ENCODE measurements at regions of chr6 and their contacts with region 1.

Region 1: GRCh38 chr6:53348371-53349208 is at the start of gene ELOVL5:
- DNase-seq: peak; percentile 99
- H3K4me3 ChIP-seq: peak within 1 kb of the TSS; percentile 77 to 81
- H3K27ac ChIP-seq: peak within 1 kb of the TSS; percentile 99
- H3K4me1 ChIP-seq: peaks cover 5% of the 10 kb centered on the region
- H3K27me3 ChIP-seq: no peaks in the 10 kb centered on the region
- CTCF ChIP-seq: peak in 1 of 4 experiments; percentile 23
- POLR2A ChIP-seq: peak; percentile 88
- total RNA-seq, gene ELOVL5: 193 to 353 TPM

Region 2: DNA sequence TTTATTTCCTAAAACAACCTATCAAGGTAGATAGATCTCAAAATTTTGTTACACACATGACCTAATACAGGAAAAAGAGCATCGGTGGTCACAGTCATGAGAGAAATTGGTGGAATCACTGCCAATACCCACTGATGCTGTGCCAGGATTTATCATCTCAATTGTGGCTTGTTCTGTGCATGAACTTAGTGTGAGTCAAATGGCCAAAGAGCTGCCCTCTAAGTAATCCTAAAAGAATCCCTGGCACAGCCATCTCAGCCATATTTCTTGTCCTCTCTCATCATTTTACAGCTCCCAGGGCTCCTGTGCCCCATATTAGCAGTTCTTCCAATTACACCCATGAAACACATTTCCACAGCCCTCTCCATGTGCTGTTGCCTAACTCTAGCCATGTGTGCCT is 514.1 kb before region 1 on chr6:
- intact Hi-C with region 1: no loop called
- DNase-seq: no peak
- H3K4me3 ChIP-seq: no peak overlapping the region
- H3K27ac ChIP-seq: no peak overlapping the region
- H3K4me1 ChIP-seq: no peaks in the 10 kb centered on the region
- H3K27me3 ChIP-seq: no peaks in the 10 kb centered on the region
- CTCF ChIP-seq: no peak
- POLR2A ChIP-seq: no peak

Region 3: GRCh38 chr6:53179961-53180651 is 168.5 kb before region 1 on chr6:
- intact Hi-C with region 1: no loop called
- DNase-seq: peak; percentile 58
- H3K4me3 ChIP-seq: no peak overlapping the region
- H3K27ac ChIP-seq: peak overlapping the region in 1 of 2 donors; percentile 28
- H3K4me1 ChIP-seq: no peaks in the 10 kb centered on the region
- H3K27me3 ChIP-seq: no peaks in the 10 kb centered on the region
- CTCF ChIP-seq: no peak
- POLR2A ChIP-seq: no peak

Region 4: DNA sequence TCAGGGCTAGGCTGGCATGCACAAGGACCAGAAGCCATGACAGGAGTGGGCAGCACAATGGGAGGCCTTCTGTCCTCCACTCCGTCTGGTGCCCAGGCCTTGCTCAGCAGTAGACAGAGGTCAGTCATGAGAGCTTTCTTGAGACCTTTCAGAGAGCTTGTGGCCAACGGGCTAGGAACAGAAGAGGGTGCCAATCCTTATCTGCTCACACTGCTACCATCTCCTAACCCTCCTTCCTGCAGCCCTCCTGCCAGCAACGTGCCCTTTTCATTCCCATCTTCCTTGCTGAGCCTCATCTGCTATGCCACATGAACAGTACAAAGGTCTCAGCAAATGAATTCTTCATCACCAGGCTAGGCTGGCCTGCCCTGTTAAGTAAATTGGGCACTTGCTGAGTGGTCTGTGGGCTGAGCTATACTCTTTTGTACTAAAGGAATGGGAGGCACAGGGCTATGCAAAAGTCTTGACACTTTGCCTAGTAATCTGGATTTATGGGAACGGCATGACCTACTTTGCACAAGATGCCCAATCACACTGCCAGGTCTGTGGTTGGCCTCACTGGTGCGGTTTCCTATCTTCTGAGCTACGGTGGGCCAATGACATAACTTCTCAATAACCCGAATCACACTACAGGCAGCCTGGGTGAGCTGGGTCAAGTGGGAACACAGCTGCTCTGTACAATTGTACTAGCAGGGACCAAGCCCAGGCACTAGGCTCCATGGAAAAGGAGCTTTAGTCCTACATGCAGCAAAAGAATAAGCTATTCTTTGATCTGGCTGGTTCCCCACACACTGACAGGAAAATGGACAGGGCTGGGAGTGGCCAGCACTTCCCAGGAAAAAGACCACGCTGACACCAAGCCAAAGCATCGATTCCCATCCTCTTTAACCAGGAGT is 47.7 kb before region 1 on chr6:
- intact Hi-C with region 1: loop called (anchors 5 kb)
- DNase-seq: peak; percentile 41
- H3K4me3 ChIP-seq: no peak overlapping the region
- H3K27ac ChIP-seq: peak overlapping the region; percentile 31 to 47
- H3K4me1 ChIP-seq: peaks cover 20% of the 10 kb centered on the region
- H3K27me3 ChIP-seq: no peaks in the 10 kb centered on the region
- CTCF ChIP-seq: no peak
- POLR2A ChIP-seq: no peak

Region 5: GRCh38 chr6:53359072-53359842 is 10.7 kb after region 1 on chr6:
- intact Hi-C with region 1: loop called (anchors 1 kb)
- DNase-seq: peak; percentile 94
- H3K4me3 ChIP-seq: peak overlapping the region; percentile 58 to 64
- H3K27ac ChIP-seq: peak overlapping the region; percentile 91 to 95
- H3K4me1 ChIP-seq: no peaks in the 10 kb centered on the region
- H3K27me3 ChIP-seq: no peaks in the 10 kb centered on the region
- CTCF ChIP-seq: no peak
- POLR2A ChIP-seq: peak; percentile 78

Measured in prostate gland (tissue), 2 donors.